Activated CD4-positive, alpha-beta T cell treated with anti-CD3 and anti-CD28 coated beads, Interleukin-2, amount 10 ng/mL, durations not matched to agents 7 days and 5 days (primary cell): ENCODE measurements at regions of chr11 and their contacts with region 1.

Region 1: DNA sequence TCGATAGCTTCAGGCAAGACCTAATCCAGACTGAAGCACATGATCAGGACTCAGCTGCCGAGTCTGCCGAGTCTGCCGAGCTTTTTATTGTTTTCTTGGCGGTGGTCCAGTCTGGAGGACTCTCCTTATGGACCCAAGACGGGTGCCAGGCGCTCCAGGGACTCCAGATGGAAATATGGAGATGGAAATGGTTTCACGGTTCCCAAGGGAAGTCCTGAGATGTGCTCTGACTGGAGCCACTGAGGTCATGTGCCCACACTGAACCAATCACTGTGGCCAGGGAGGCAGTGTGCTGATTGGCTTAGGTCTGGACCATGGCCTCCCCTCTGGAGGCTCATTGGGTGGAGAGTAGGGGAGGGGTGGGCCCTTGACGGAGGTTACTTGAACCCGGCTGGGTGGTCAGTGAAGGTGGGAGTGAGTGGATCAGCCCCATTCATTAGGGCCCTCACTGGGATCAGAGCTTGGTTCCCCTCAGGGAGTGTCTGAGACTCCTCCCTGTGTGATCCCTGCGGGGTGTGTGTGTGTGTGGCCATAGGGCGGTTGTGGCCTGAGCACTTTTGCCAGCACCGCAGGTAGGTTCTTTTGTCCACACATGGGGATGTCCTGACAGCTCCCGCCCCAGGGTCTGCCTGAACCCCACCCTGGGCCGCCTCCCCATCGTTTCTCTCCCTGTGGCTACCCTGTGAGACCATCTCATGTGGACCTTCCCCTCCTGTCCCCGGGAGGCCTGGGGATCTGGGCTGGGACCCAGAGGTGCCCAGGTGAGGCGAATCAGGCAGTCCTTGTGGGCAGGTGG is 14.0 kb downstream of the RPS6KA4 start:
- DNase-seq: no peak
- H3K4me3 Mint-ChIP-seq: no peak overlapping the region
- H3K27ac Mint-ChIP-seq: no peak overlapping the region
- H3K4me1 Mint-ChIP-seq: no peaks in the 10 kb centered on the region
- H3K27me3 Mint-ChIP-seq: no peaks in the 10 kb centered on the region

Region 2: GRCh38 chr11:64428693-64429092 is 55.7 kb after region 1 on chr11:
- CTCF ChIA-PET with region 1: no interaction called
- POLR2A ChIA-PET with region 1: no interaction called
- DNase-seq: no peak
- H3K4me3 Mint-ChIP-seq: no peak overlapping the region
- H3K27ac Mint-ChIP-seq: no peak overlapping the region
- H3K4me1 Mint-ChIP-seq: no peaks in the 10 kb centered on the region
- H3K27me3 Mint-ChIP-seq: no peaks in the 10 kb centered on the region

Region 3: DNA sequence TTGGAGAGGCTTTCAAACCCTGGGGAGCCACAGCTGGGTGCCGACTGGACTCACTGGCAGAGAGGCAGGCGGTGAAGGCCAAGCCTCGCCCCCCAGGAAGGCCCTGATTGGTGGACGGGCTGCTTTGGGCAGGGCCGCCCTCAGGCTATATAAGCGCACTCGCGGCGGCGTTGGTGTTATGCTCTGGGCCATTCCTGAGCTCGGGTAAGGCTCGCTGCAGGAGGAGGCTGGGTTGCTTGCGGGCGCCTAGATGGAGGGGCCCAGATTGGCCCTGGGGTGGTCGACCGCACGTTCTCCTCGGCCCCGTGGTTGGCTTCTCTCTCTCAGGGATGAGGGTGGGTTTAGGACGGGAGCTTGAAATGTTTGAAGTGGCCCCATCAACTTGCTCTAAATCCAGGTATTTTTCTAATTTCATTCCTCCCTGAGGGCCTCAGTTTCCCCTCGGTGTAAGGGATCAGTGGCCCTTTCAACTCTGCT is 797.1 kb after region 1 on chr11 and contains the start of gene SPDYC:
- CTCF ChIA-PET with region 1: no interaction called
- POLR2A ChIA-PET with region 1: interaction called, 14 read pairs
- DNase-seq: no peak
- H3K4me3 Mint-ChIP-seq: no peak within 1 kb of the TSS
- H3K27ac Mint-ChIP-seq: peak within 1 kb of the TSS; percentile 91
- H3K4me1 Mint-ChIP-seq: peaks cover 12% of the 10 kb centered on the region
- H3K27me3 Mint-ChIP-seq: no peaks in the 10 kb centered on the region
- total RNA-seq, gene SPDYC: not detected